CD14-positive monocyte (primary cell): ENCODE measurements at regions of chr1 and their contacts with region 1.

Region 1: DNA sequence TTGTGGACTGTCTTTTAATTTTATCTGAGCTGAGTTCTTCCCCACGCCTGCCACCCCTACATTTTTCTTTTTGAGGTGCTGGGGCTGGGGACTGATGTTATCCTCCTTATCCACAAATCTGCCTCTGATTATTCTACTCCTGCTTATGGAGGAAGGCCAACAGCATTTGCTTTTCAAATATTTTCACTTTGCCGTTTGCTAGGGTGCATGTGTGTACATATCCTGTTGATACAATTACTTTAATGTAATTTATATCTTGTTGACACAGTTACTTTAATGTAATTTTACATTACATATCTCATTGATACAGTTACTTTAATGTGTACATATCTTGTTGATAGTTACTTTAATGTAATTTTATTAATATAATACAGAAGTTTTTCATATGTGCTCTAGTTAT is 36.2 kb downstream of the PRRC2C start:
- DNase-seq: no peak
- H3K4me3 ChIP-seq: no peak overlapping the region
- H3K4me3 Mint-ChIP-seq: no peak overlapping the region
- H3K27ac ChIP-seq: no peak overlapping the region
- H3K27ac Mint-ChIP-seq: peak overlapping the region in 1 of 7 donors; percentile 76
- H3K4me1 ChIP-seq: no peaks in the 10 kb centered on the region
- H3K4me1 Mint-ChIP-seq: no peaks in the 10 kb centered on the region
- H3K27me3 ChIP-seq: no peaks in the 10 kb centered on the region
- H3K27me3 Mint-ChIP-seq: no peaks in the 10 kb centered on the region
- CTCF ChIP-seq: no peak

Region 2: DNA sequence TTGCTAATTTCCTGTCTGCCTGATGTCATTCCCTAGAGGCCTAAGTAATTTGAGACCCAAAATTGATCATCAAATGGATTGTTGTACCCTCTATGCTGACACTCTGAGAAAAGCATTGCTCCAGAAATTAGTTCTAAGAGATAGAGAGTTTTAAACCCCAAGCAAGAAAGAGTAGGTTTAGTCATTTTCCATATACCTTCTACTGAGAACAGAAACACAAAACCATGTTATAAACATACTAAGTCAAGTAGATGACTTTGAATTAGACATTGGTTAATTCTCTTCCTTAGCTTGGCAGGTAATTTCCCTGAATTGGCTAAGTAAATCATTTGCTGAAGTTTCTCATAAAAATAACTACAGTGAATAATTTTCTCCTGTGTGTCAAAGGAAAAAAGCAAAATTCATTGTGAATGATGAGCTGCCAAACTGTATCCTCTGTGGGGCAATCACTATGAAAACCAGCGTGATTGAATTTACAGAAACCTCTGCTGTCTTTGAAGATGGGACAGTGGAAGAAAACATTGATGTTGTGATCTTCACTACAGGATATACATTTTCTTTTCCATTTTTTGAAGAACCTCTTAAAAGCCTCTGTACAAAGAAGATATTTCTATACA is 187.4 kb before region 1 on chr1:
- intact Hi-C with region 1: no loop called
- DNase-seq: no peak
- H3K4me3 ChIP-seq: no peak overlapping the region
- H3K4me3 Mint-ChIP-seq: no peak overlapping the region
- H3K27ac ChIP-seq: no peak overlapping the region
- H3K27ac Mint-ChIP-seq: no peak overlapping the region
- H3K4me1 ChIP-seq: no peaks in the 10 kb centered on the region
- H3K4me1 Mint-ChIP-seq: no peaks in the 10 kb centered on the region
- H3K27me3 ChIP-seq: no peaks in the 10 kb centered on the region
- H3K27me3 Mint-ChIP-seq: peaks cover 0 to 5% (median 0%) of the 10 kb centered on the region in 3 donors
- CTCF ChIP-seq: no peak

Region 3: DNA sequence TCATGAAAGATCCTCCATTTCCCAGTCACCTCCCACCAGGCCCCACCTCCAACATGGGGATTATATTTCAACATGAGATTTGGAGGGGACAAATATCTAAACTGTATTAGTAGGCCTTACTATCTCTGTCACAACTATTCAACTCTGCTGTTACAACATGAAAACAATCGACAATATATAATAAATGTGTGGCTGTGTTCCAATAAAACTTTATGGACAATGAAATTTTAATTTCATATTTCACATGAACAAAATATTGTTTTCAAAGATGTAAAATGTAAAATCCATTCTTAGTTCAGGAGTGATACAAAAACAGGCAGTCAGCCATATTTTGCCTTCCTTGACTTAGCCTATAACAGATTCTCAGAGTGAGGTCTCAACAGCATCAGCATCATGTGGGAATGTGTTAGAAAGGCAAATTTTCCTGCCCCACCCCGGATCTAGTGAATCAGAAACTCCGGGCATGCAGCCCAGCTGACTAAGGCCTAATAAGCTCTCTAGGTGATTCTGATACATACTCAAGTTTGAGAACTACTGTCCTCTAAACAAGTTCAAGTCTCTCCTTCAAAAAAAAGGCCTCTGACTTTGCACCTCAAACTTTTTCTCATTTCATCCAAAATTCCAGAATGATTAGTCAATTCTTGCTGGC is 83.3 kb before region 1 on chr1:
- intact Hi-C with region 1: no loop called
- DNase-seq: no peak
- H3K4me3 ChIP-seq: no peak overlapping the region
- H3K4me3 Mint-ChIP-seq: no peak overlapping the region
- H3K27ac ChIP-seq: no peak overlapping the region
- H3K27ac Mint-ChIP-seq: no peak overlapping the region
- H3K4me1 ChIP-seq: peaks cover 19 to 23% of the 10 kb centered on the region in 2 donors
- H3K4me1 Mint-ChIP-seq: peaks cover 21% of the 10 kb centered on the region
- H3K27me3 ChIP-seq: no peaks in the 10 kb centered on the region
- H3K27me3 Mint-ChIP-seq: peaks cover 0 to 1% (median 0%) of the 10 kb centered on the region in 3 donors
- CTCF ChIP-seq: no peak

Region 4: GRCh38 chr1:171583581-171584201 is 62.1 kb after region 1 on chr1:
- intact Hi-C with region 1: loop called in 1 of 2 experiments (anchors 10 kb)
- DNase-seq: no peak
- H3K4me3 ChIP-seq: no peak overlapping the region
- H3K4me3 Mint-ChIP-seq: no peak overlapping the region
- H3K27ac ChIP-seq: no peak overlapping the region
- H3K27ac Mint-ChIP-seq: peak overlapping the region in 1 of 7 donors; percentile 16
- H3K4me1 ChIP-seq: no peaks in the 10 kb centered on the region
- H3K4me1 Mint-ChIP-seq: no peaks in the 10 kb centered on the region
- H3K27me3 ChIP-seq: no peaks in the 10 kb centered on the region
- H3K27me3 Mint-ChIP-seq: peaks cover 0 to 2% (median 0%) of the 10 kb centered on the region in 3 donors
- CTCF ChIP-seq: no peak

Region 5: GRCh38 chr1:171868217-171868803 is 346.7 kb after region 1 on chr1:
- intact Hi-C with region 1: no loop called
- DNase-seq: no peak
- H3K4me3 ChIP-seq: no peak overlapping the region
- H3K4me3 Mint-ChIP-seq: no peak overlapping the region
- H3K27ac ChIP-seq: no peak overlapping the region
- H3K27ac Mint-ChIP-seq: no peak overlapping the region
- H3K4me1 ChIP-seq: no peaks in the 10 kb centered on the region
- H3K4me1 Mint-ChIP-seq: peaks cover 6% of the 10 kb centered on the region
- H3K27me3 ChIP-seq: no peaks in the 10 kb centered on the region
- H3K27me3 Mint-ChIP-seq: peaks cover 0 to 2% (median 0%) of the 10 kb centered on the region in 3 donors
- CTCF ChIP-seq: no peak